Tibial artery (tissue), 4 donors: ENCODE measurements at regions of chr1 and their contacts with region 1.

Region 1: GRCh38 chr1:210647406-210648333 is 319.0 kb downstream of the HHAT start:
- DNase-seq: no peak
- H3K4me3 ChIP-seq: no peak overlapping the region
- H3K27ac ChIP-seq: no peak overlapping the region
- H3K4me1 ChIP-seq: no peaks in the 10 kb centered on the region
- H3K27me3 ChIP-seq: no peaks in the 10 kb centered on the region
- CTCF ChIP-seq: no peak

Region 2: GRCh38 chr1:209389258-209389657 is 1258.4 kb before region 1 on chr1:
- intact Hi-C with region 1: loop called (anchors 5 kb)
- DNase-seq: no peak
- H3K4me3 ChIP-seq: no peak overlapping the region
- H3K27ac ChIP-seq: no peak overlapping the region
- H3K4me1 ChIP-seq: no peaks in the 10 kb centered on the region
- H3K27me3 ChIP-seq: no peaks in the 10 kb centered on the region
- CTCF ChIP-seq: no peak